Posterior vena cava (tissue), 2 donors: ENCODE measurements at regions of chr11 and their contacts with region 1.

Region 1: GRCh38 chr11:69039501-69039900 is 9.2 kb upstream of the TPCN2 start:
- DNase-seq: no peak

Region 2: DNA sequence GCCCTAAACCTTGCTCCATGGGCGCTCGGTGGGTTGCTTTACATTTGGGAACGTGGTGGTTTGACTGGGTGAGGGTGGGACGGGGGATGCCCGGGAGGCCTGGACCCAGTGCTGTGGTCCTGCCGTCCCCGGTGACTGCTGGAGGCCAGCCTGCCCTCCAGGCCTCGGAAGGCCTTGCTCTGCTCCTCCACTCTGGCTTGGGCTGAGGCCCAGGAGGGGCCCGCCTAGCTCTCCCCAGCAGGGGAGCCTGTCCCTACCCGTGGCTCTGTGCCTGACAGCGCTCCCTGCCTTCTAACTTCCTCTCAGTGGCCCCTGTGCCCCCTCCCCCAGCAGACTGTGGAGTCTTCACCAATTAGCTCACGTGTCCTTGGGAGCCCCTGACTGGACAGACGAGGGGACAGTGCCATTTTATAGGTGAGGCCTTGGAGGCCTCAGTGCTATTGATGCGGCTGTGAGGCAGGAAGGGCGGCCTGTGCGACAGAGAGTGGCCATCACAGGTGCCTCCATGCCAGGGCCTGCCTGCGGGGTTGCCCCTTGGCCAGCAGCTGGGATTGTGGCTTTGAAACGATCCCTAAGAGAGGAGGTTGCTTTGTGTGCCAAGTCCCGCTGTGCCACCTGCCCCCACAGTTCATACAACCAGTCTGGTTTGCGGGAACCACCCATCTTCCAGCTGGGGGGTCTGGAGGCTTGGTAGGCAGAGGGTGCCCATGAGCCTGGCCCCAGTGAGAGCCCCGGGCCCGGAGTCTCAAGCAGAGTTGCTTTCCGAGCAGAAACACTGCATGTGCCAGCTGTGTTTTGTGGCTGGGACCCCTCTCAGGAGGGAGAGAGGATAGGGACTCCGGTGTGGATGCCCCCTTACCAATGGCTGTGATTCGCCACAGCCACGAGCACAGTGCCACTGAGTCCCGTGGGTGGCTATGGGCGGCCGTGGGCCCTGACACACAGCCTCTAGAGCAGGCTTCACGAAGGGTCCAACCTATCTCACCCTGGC is 26.9 kb after region 1 on chr11:
- intact Hi-C with region 1: loop called in 1 of 2 experiments (anchors 1 kb)
- DNase-seq: no peak